ENCODE measurements at regions of chr17 and their contacts with region 1.

Region 1: DNA sequence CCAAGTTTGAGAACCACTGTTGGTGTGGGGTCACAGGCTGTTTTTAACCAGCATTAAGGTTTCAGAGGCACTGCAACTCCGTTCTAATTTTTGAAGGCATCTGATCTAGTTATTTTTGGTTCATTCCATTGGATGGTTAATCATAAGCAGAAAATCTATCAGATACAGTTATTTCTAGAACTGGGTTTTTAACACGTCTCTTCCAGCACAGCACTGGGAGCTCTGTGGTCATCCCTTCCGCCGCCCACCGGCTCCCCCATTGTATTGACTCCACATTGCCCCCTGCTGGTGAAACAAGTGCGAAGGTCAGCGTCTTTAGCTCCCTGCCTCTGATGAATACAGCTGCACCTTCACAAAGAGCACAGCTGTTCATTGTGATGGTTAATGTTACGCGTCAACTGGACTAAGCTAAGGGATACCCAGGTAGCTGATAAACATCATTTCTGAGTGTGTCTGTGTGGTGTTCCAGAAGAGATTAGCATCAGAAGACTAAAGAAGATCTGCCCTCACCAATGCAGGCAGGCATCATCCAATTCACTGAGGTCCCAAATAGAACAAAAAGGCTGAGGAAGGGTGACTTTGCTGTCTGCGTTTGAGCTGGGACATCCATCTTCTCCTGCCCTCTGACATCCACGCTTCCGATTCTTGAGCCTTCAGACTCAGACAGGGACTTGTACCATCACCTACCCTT is 8.5 kb downstream of the CCL18 start:
- DNase-seq: peak; percentile 55
- H3K4me3 ChIP-seq: no peak overlapping the region
- H3K27ac ChIP-seq: no peak overlapping the region
- H3K4me1 ChIP-seq: no peaks in the 10 kb centered on the region
- CTCF ChIP-seq: peak; percentile 87

Region 2: DNA sequence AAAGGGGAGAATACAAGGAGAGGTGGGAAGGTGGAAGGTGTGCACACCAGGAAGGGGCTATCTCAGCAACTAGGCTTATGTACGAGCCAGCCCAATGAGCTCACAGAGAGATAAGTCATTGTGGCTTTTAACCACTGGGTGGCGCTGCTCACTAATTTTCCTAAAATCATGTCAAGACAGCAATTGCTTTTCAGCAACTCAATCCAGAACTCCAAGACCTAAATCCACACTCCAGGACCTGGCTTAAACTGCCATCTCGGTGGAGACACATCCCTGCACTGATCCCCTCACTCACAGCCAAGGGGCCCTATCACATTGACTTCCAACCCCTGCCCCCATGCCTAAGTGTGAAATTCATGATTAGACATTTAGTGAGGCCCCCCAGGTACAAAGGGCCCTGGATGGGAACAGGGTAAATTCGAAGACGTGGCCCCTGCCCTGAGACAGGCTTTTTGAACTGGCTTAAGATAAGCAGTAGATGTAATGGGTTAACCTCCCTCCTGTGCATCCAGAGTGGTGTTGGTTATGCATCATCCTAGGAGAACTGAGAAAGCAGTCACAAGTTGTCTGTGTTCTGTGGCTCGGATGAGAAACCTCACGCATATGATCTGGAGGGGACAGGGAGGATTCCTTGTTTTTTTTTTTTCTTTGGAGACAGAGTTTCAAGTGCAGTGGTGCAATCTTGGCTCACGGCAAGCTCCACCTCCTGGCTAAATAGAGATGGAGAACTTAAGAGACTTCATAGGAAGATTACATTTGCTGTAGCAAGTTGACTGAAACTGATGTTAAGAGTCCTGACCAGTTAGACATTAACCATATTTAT is 102.8 kb before region 1 on chr17:
- CTCF ChIA-PET with region 1: no interaction called
- POLR2A ChIA-PET with region 1: interaction called, 3 read pairs
- intact Hi-C with region 1: loop called (anchors 10 kb)
- DNase-seq: peak; percentile 77
- H3K4me3 ChIP-seq: no peak overlapping the region
- H3K27ac ChIP-seq: no peak overlapping the region
- H3K4me1 ChIP-seq: no peaks in the 10 kb centered on the region
- CTCF ChIP-seq: peak; percentile 94

Region 3: GRCh38 chr17:36017799-36018198 is 54.8 kb before region 1 on chr17 and contains the start of gene CCL23:
- CTCF ChIA-PET with region 1: no interaction called
- POLR2A ChIA-PET with region 1: no interaction called
- intact Hi-C with region 1: no loop called
- DNase-seq: no peak
- H3K4me3 ChIP-seq: no peak within 1 kb of the TSS
- H3K27ac ChIP-seq: no peak within 1 kb of the TSS
- H3K4me1 ChIP-seq: no peaks in the 10 kb centered on the region
- CTCF ChIP-seq: no peak
- total RNA-seq, gene CCL23: not detected in 2 replicates